Mammary epithelial cell (primary cell): ENCODE measurements at regions of chr5 and their contacts with region 1.

Region 1: DNA sequence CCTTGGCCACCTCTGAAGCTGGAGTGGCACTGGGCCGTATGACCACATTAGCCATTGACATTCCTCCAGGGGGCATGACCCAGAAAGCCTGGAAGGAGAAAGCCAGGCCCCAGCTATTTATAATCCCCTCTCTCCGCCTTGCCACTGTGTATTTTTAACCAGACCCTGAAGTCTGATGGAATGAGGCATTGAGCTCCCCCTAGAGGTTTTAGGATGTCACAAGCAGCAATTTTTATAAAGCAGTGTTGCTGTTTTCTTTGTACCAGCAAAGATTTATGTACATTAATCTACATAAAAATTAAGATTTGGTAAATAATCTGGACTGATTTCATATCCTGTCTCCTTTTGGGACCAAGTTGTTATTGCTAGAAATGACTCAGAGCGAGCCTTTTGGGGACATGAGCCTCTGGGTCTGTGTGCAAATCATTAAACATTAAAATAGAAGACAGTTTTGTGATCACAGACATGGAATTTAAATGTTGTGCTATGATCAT is 127.1 kb downstream of the TRIO start:
- DNase-seq: peak; percentile 43
- H3K4me3 ChIP-seq: no peak overlapping the region
- H3K27ac ChIP-seq: peak overlapping the region; percentile 95
- H3K4me1 ChIP-seq: peaks cover 55% of the 10 kb centered on the region
- H3K27me3 ChIP-seq: no peaks in the 10 kb centered on the region
- CTCF ChIP-seq: peak; percentile 75 to 84

Region 2: DNA sequence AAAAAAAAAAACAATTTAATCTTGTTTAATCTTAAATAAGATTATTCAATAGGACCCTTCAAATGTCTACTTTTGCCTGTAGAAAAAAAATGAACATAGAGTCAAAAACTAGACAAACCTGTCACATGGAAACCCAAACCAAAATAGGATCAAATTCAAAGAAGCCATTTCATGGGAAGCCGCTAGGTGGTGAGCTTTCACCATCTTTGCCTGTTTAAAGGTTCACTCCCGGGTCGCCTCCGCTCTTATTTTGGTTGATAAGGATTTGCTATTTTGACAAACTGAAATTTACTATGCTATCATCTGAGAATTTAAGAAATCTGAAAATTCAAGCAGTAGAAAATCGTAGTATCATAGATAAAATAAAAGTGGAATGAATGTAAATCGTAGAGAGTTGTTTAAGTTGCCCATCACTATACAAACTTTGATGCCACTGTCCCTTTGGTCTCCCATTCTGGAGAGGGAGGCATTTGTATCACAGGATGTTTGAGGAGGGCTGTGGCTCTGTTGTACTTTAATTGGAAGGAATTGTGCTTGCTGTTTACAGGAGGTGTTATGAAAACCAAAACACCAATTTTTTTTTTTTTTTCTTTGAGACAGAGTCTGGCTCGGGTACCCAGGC is 282.3 kb before region 1 on chr5:
- CTCF ChIA-PET with region 1: interaction called, 3 read pairs
- dilution Hi-C with region 1: no loop called
- in situ Hi-C with region 1: loop called (anchors 5 kb)
- intact Hi-C with region 1: loop called (anchors 1 kb)
- DNase-seq: peak; percentile 49
- H3K4me3 ChIP-seq: no peak overlapping the region
- H3K27ac ChIP-seq: no peak overlapping the region
- H3K4me1 ChIP-seq: peaks cover 21% of the 10 kb centered on the region
- H3K27me3 ChIP-seq: no peaks in the 10 kb centered on the region
- CTCF ChIP-seq: peak; percentile 86 to 91

Region 3: GRCh38 chr5:14011089-14012004 is 258.9 kb before region 1 on chr5:
- CTCF ChIA-PET with region 1: no interaction called
- dilution Hi-C with region 1: no loop called
- in situ Hi-C with region 1: no loop called
- intact Hi-C with region 1: loop called (anchors 2 kb)
- DNase-seq: peak; percentile 90
- H3K4me3 ChIP-seq: peak overlapping the region; percentile 55 to 73 (median 62)
- H3K27ac ChIP-seq: peak overlapping the region; percentile 87
- H3K4me1 ChIP-seq: peaks cover 5% of the 10 kb centered on the region
- H3K27me3 ChIP-seq: no peaks in the 10 kb centered on the region
- CTCF ChIP-seq: peak in 1 of 2 donors; percentile 17

Region 4: DNA sequence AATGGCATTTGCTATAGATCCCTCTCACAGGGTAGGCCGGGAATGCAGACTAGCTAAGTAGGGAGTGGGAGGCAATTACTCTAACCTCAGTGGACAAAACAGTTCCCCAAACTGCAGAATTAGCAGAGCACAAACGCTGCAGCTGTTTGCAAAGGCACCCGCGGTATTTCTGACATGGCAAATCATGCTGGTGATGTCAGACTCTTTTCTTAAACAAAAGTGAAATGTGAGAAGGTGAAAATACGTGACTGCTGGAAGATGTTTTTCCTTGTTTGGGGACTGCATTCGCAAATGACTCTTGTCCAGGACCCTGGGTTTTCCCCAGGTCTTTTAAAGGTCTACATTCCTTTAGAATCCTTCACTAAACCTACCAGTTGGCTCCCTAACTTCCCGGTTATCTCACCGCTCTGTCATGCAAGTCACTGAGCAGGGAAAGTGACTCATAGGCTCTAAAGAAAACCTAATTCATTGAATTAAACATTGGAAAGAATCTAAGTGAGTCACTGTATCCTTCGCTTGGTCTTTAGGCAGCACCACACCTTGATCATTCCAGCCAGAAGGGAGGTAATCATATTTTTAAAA is 234.3 kb before region 1 on chr5:
- CTCF ChIA-PET with region 1: no interaction called
- dilution Hi-C with region 1: no loop called
- in situ Hi-C with region 1: no loop called
- intact Hi-C with region 1: loop called (anchors 1 kb)
- DNase-seq: peak; percentile 99
- H3K4me3 ChIP-seq: peak overlapping the region in 2 of 3 experiments; percentile 7 to 22
- H3K27ac ChIP-seq: peak overlapping the region; percentile 93
- H3K4me1 ChIP-seq: peaks cover 62% of the 10 kb centered on the region
- H3K27me3 ChIP-seq: no peaks in the 10 kb centered on the region
- CTCF ChIP-seq: no peak

Region 5: GRCh38 chr5:14108170-14108996 is 161.9 kb before region 1 on chr5:
- CTCF ChIA-PET with region 1: interaction called, 5 read pairs
- dilution Hi-C with region 1: no loop called
- in situ Hi-C with region 1: no loop called
- intact Hi-C with region 1: loop called (anchors 1 kb)
- DNase-seq: no peak
- H3K4me3 ChIP-seq: no peak overlapping the region
- H3K27ac ChIP-seq: peak overlapping the region; percentile 79
- H3K4me1 ChIP-seq: peaks cover 38% of the 10 kb centered on the region
- H3K27me3 ChIP-seq: no peaks in the 10 kb centered on the region
- CTCF ChIP-seq: peak in 1 of 2 donors; percentile 40

Region 6: GRCh38 chr5:14560091-14560595 is 289.9 kb after region 1 on chr5:
- CTCF ChIA-PET with region 1: no interaction called
- dilution Hi-C with region 1: no loop called
- in situ Hi-C with region 1: no loop called
- intact Hi-C with region 1: no loop called
- DNase-seq: no peak
- H3K4me3 ChIP-seq: no peak overlapping the region
- H3K27ac ChIP-seq: no peak overlapping the region
- H3K4me1 ChIP-seq: no peaks in the 10 kb centered on the region
- H3K27me3 ChIP-seq: no peaks in the 10 kb centered on the region
- CTCF ChIP-seq: no peak